HCT116 (cell line): ENCODE measurements at regions of chr10 and their contacts with region 1.

Region 1: GRCh38 chr10:23314835-23315239 is 29.8 kb downstream of the C10orf67 start:
- DNase-seq: peak; percentile 57
- ATAC-seq: peak; percentile 63; the same call in 1 of the 2 replicates
- H3K4me3 ChIP-seq: no peak overlapping the region
- H3K27ac ChIP-seq: no peak overlapping the region
- H3K4me1 ChIP-seq: no peaks in the 10 kb centered on the region
- H3K27me3 ChIP-seq: peaks cover 15% of the 10 kb centered on the region
- CTCF ChIP-seq: peak; percentile 45 to 72 (median 66); a peak in 5 of 6 replicates
- POLR2A ChIP-seq: no peak
- RAD21 ChIP-seq: peak; percentile 80

Region 2: GRCh38 chr10:23525406-23525805 is 210.6 kb after region 1 on chr10:
- CTCF ChIA-PET with region 1: interaction called, 27 read pairs
- POLR2A ChIA-PET with region 1: no interaction called
- RAD21 ChIA-PET with region 1: no interaction called
- intact Hi-C with region 1: loop called (anchors 1 kb)
- DNase-seq: no peak
- ATAC-seq: peak; percentile 83
- H3K4me3 ChIP-seq: no peak overlapping the region
- H3K27ac ChIP-seq: no peak overlapping the region
- H3K4me1 ChIP-seq: no peaks in the 10 kb centered on the region
- H3K27me3 ChIP-seq: peaks cover 9% of the 10 kb centered on the region; the same call in 1 of the 2 replicates
- CTCF ChIP-seq: peak; percentile 44 to 48 (median 45); a peak in 5 of 6 replicates
- POLR2A ChIP-seq: no peak
- RAD21 ChIP-seq: peak; percentile 67

Region 3: GRCh38 chr10:23656735-23657134 is 341.9 kb after region 1 on chr10:
- CTCF ChIA-PET with region 1: interaction called, 3 read pairs
- POLR2A ChIA-PET with region 1: no interaction called
- RAD21 ChIA-PET with region 1: no interaction called
- intact Hi-C with region 1: loop called (anchors 5 kb)
- DNase-seq: no peak
- ATAC-seq: no peak
- H3K4me3 ChIP-seq: no peak overlapping the region
- H3K27ac ChIP-seq: no peak overlapping the region
- H3K4me1 ChIP-seq: no peaks in the 10 kb centered on the region
- H3K27me3 ChIP-seq: no peaks in the 10 kb centered on the region
- CTCF ChIP-seq: peak; percentile 20 to 58 (median 48); a peak in 5 of 6 replicates
- POLR2A ChIP-seq: no peak
- RAD21 ChIP-seq: peak; percentile 39; the same call in 1 of the 2 replicates

Region 4: DNA sequence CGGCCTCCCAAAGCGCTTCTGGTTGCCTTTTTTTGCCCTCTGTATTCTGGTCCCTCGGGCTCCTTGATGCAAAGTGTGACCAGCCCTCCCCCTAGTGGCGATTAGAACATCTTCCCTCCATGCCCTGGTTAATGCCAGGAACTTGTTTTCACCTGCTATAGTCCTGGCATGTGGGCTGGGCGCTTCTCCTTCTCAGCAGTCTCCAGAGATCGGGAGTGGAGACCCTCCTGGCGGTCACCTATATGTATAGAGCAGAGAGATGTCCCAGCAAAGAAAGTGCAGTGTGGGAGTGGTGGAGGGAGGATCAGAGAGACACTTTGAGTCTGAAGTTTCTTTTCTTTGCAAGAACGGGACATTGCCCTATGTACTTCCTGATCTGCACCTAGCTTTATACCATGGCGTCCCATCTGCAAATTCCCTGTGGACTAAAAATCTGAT is 388.2 kb after region 1 on chr10:
- CTCF ChIA-PET with region 1: interaction called, 4 read pairs
- POLR2A ChIA-PET with region 1: no interaction called
- RAD21 ChIA-PET with region 1: no interaction called
- intact Hi-C with region 1: loop called (anchors 1 kb)
- DNase-seq: peak; percentile 70
- ATAC-seq: peak; percentile 99
- H3K4me3 ChIP-seq: no peak overlapping the region
- H3K27ac ChIP-seq: no peak overlapping the region
- H3K4me1 ChIP-seq: no peaks in the 10 kb centered on the region
- H3K27me3 ChIP-seq: no peaks in the 10 kb centered on the region
- CTCF ChIP-seq: peak; percentile 65 to 73 (median 69)
- POLR2A ChIP-seq: no peak
- RAD21 ChIP-seq: peak; percentile 72

Region 5: DNA sequence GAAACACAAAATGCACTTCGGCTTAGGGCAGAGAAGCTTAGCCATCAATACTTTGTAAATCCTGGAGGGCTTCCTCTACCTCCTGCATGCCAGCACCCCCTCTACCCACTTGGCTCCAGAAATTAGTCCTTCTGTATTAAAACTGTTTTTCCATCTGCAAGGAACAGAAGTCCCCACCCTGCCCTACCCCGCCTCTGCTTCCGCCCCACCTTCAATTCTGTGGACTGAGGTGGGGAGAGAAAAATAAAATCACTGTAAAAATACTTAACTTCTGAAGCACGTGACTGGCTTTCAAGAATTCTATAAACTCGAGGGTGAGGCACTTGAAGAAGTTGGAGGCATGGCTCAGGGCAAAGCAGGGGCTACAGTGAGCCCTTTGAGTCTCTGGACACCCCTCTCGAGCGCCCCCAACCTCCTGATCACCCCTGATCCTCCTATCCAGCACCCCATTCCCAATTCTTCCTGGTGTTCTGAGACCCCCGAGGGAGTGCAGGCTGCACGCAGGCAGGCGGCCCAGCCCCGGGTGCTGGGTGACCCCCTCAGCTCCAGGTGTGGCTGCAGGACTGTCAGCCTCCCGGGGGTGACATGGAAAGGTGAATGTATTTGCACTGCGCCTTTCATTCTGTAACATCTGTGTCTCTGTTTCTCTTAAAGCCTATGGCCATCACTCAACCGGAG is 886.8 kb after region 1 on chr10:
- CTCF ChIA-PET with region 1: no interaction called
- POLR2A ChIA-PET with region 1: no interaction called
- RAD21 ChIA-PET with region 1: no interaction called
- intact Hi-C with region 1: loop called (anchors 5 kb)
- DNase-seq: no peak
- ATAC-seq: no peak
- H3K4me3 ChIP-seq: no peak overlapping the region
- H3K27ac ChIP-seq: no peak overlapping the region
- H3K4me1 ChIP-seq: no peaks in the 10 kb centered on the region
- H3K27me3 ChIP-seq: 0 out of 2 replicates have a peak, but pooled peaks cover 2% of the 10 kb centered on the region
- CTCF ChIP-seq: no peak
- POLR2A ChIP-seq: no peak
- RAD21 ChIP-seq: no peak

Region 6: GRCh38 chr10:24518981-24519597 is 1204.3 kb after region 1 on chr10:
- CTCF ChIA-PET with region 1: no interaction called
- POLR2A ChIA-PET with region 1: no interaction called
- RAD21 ChIA-PET with region 1: no interaction called
- intact Hi-C with region 1: loop called (anchors 10 kb)
- DNase-seq: peak; percentile 23
- ATAC-seq: peak; percentile 86
- H3K4me3 ChIP-seq: no peak overlapping the region
- H3K27ac ChIP-seq: no peak overlapping the region
- H3K4me1 ChIP-seq: peaks cover 0 to 3% of the 10 kb centered on the region in 2 experiments; a peak in 1 of 4 replicates
- H3K27me3 ChIP-seq: no peaks in the 10 kb centered on the region
- CTCF ChIP-seq: peak; percentile 53 to 84 (median 73); a peak in 5 of 6 replicates
- POLR2A ChIP-seq: no peak
- RAD21 ChIP-seq: peak; percentile 80